K562 (cell line): ENCODE measurements at regions of chr17 and their contacts with region 1.

Region 1: DNA sequence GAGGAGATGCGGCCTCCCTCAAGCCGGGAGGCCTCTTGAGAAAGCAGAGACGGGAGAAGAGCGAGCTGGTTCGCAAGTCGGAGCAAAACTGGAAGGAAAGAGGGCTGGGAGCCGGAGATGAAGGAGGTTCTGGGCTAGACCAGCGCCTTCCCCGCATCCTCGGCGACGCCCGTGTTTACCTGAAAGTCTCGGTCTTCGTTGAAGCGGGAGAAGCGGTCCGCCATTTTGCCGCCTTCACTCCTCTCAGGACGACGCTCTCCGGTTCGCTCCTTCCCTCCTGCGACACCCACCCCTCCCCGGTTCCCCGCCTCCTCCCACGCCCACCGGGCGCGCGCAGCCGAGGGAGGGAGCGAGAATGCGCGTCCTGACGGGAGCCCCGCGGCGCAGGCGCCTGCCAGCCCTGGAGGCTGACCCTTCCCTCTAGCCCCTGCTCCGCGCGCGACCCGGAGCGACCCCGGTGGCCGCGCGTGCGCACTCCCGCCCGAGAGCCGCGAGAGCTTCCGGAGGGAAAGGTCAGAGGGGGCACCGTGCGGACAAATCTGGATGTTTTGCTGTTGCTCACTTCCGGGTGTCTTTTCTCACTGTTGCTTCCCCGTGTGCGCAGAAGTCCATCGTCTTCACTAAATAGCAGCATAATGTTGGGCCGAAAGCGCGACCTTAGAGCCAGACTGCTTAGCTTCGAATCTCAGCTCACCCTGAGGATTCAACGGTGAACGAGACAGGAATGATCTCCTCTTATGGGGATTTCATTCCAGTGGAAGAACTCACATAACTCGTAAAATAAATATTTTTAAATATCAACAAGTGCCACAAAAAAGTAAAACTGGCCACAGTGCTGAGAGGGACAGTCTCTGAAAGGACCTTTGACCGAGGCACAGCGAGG is at the start of gene GPATCH8:
- DNase-seq: peak; percentile 97 to 100 (median 100)
- ATAC-seq: peak; percentile 97
- H3K4me3 ChIP-seq: peak within 1 kb of the TSS; percentile 96
- H3K27ac ChIP-seq: peak within 1 kb of the TSS; percentile 88
- H3K4me1 ChIP-seq: peaks cover 4 to 12% of the 10 kb centered on the region in 2 experiments; a peak in 4 of 5 replicates
- H3K27me3 ChIP-seq: no peaks in the 10 kb centered on the region
- CTCF ChIP-seq: no peak
- EP300 ChIP-seq: peak; percentile 13; the same call in 1 of the 2 replicates
- POLR2A ChIP-seq: peak; percentile 84
- RAD21 ChIP-seq: no peak
- polyA plus RNA-seq, gene GPATCH8: 12.0 to 13.2 TPM

Region 2: GRCh38 chr17:44385287-44386181 is 117.9 kb before region 1 on chr17:
- CTCF ChIA-PET with region 1: interaction called, 3 read pairs
- POLR2A ChIA-PET with region 1: interaction called, 3 read pairs
- in situ Hi-C with region 1: no loop called
- intact Hi-C with region 1: loop called (anchors 5 kb)
- DNase-seq: peak; percentile 93 to 99 (median 98)
- ATAC-seq: peak; percentile 91
- H3K4me3 ChIP-seq: peak overlapping the region; percentile 58
- H3K27ac ChIP-seq: peak overlapping the region; percentile 83
- H3K4me1 ChIP-seq: peaks cover 33 to 44% of the 10 kb centered on the region in 2 experiments
- H3K27me3 ChIP-seq: no peaks in the 10 kb centered on the region; a peak in 1 of 5 replicates
- CTCF ChIP-seq: peak; percentile 32 to 61 (median 53); a peak in 5 of 6 replicates
- EP300 ChIP-seq: no peak
- POLR2A ChIP-seq: peak; percentile 81
- RAD21 ChIP-seq: peak in 1 of 2 experiments; percentile 34; a peak in 1 of 4 replicates

Region 3: GRCh38 chr17:44493339-44493738 is 10.0 kb before region 1 on chr17:
- CTCF ChIA-PET with region 1: no interaction called
- POLR2A ChIA-PET with region 1: interaction called, 10 read pairs
- in situ Hi-C with region 1: no loop called
- intact Hi-C with region 1: no loop called
- DNase-seq: no peak
- ATAC-seq: no peak
- H3K4me3 ChIP-seq: no peak overlapping the region
- H3K27ac ChIP-seq: no peak overlapping the region
- H3K4me1 ChIP-seq: no peaks in the 10 kb centered on the region
- H3K27me3 ChIP-seq: no peaks in the 10 kb centered on the region
- CTCF ChIP-seq: no peak
- EP300 ChIP-seq: no peak
- POLR2A ChIP-seq: no peak
- RAD21 ChIP-seq: no peak

Region 4: DNA sequence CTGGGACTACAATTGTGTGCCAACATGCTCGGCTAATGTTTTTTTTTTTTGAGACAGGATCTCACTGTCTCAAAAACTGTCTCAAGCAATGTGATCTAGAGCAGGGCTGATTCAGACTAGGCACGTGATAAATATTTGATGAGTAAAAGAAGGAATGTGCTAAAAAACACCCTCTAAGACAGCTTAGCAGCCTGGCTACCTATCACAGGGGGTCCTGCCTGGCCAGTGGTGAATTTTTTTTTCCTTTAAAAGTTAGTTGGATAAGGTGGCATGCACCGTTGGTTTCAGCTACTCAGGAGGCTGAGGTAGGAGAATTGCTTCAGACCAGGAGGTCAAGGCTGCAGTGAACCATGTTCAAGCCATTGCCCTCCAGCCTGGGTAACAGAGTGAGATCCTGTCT is 14.6 kb after region 1 on chr17:
- CTCF ChIA-PET with region 1: no interaction called
- POLR2A ChIA-PET with region 1: no interaction called
- in situ Hi-C with region 1: no loop called
- intact Hi-C with region 1: no loop called
- DNase-seq: no peak
- ATAC-seq: no peak
- H3K4me3 ChIP-seq: no peak overlapping the region
- H3K27ac ChIP-seq: no peak overlapping the region
- H3K4me1 ChIP-seq: peaks cover 3 to 4% of the 10 kb centered on the region in 2 experiments; a peak in 3 of 5 replicates
- H3K27me3 ChIP-seq: no peaks in the 10 kb centered on the region
- CTCF ChIP-seq: no peak
- EP300 ChIP-seq: no peak
- POLR2A ChIP-seq: no peak
- RAD21 ChIP-seq: no peak